CD4-positive, alpha-beta T cell (primary cell): ENCODE measurements at regions of chr16 and their contacts with region 1.

Region 1: GRCh38 chr16:17416461-17417311 is 54.1 kb downstream of the XYLT1 start:
- DNase-seq: peak; percentile 24 to 80 (median 37)
- ATAC-seq: peak; percentile 92
- H3K4me3 ChIP-seq: peak overlapping the region; percentile 46
- H3K4me3 Mint-ChIP-seq: peak overlapping the region; percentile 87
- H3K27ac ChIP-seq: peak overlapping the region; percentile 47 to 60
- H3K27ac Mint-ChIP-seq: peak overlapping the region; percentile 84
- H3K4me1 ChIP-seq: peaks cover 48% of the 10 kb centered on the region
- H3K4me1 Mint-ChIP-seq: peaks cover 53% of the 10 kb centered on the region
- H3K27me3 ChIP-seq: no peaks in the 10 kb centered on the region
- H3K27me3 Mint-ChIP-seq: no peaks in the 10 kb centered on the region
- CTCF ChIP-seq: peak; percentile 46

Region 2: DNA sequence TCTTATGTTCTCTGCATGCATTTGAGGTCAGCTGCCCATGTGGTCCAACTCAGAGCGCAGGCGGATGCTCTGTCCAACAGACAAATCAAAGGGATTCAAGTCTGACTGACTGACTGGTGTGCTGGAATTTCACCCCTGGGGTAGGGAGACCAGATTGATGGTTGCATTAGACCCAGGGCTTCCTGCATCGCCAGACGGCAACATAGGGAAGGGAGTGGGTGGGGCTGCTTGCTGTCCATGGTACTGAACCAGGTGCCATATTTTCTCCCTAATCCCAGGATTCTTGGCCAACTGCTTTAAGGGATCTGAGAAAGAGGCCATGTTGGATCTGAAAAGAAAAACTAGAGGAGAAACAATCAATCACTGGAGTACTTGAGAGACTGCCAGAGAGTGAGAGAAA is 277.9 kb before region 1 on chr16:
- CTCF ChIA-PET with region 1: no interaction called
- POLR2A ChIA-PET with region 1: no interaction called
- intact Hi-C with region 1: loop called in 1 of 2 experiments (anchors 5 kb)
- DNase-seq: no peak
- ATAC-seq: no peak
- H3K4me3 ChIP-seq: no peak overlapping the region
- H3K4me3 Mint-ChIP-seq: no peak overlapping the region
- H3K27ac ChIP-seq: no peak overlapping the region
- H3K27ac Mint-ChIP-seq: no peak overlapping the region
- H3K4me1 ChIP-seq: no peaks in the 10 kb centered on the region
- H3K4me1 Mint-ChIP-seq: peaks cover 17% of the 10 kb centered on the region
- H3K27me3 ChIP-seq: no peaks in the 10 kb centered on the region
- H3K27me3 Mint-ChIP-seq: no peaks in the 10 kb centered on the region
- CTCF ChIP-seq: no peak

Region 3: GRCh38 chr16:17313085-17313611 is 103.5 kb before region 1 on chr16:
- CTCF ChIA-PET with region 1: no interaction called
- POLR2A ChIA-PET with region 1: no interaction called
- intact Hi-C with region 1: no loop called
- DNase-seq: peak in 1 of 14 experiments; percentile 25
- ATAC-seq: no peak
- H3K4me3 ChIP-seq: no peak overlapping the region
- H3K4me3 Mint-ChIP-seq: no peak overlapping the region
- H3K27ac ChIP-seq: peak overlapping the region in 1 of 2 donors; percentile 9
- H3K27ac Mint-ChIP-seq: peak overlapping the region; percentile 52
- H3K4me1 ChIP-seq: peaks cover 12% of the 10 kb centered on the region
- H3K4me1 Mint-ChIP-seq: peaks cover 64% of the 10 kb centered on the region
- H3K27me3 ChIP-seq: no peaks in the 10 kb centered on the region
- H3K27me3 Mint-ChIP-seq: no peaks in the 10 kb centered on the region
- CTCF ChIP-seq: no peak

Region 4: GRCh38 chr16:17343028-17343427 is 73.7 kb before region 1 on chr16:
- CTCF ChIA-PET with region 1: no interaction called
- POLR2A ChIA-PET with region 1: no interaction called
- intact Hi-C with region 1: loop called in 1 of 2 experiments (anchors 5 kb)
- DNase-seq: peak in 11 of 14 experiments; percentile 6 to 76 (median 34)
- ATAC-seq: peak; percentile 83
- H3K4me3 ChIP-seq: no peak overlapping the region
- H3K4me3 Mint-ChIP-seq: peak overlapping the region; percentile 75
- H3K27ac ChIP-seq: no peak overlapping the region
- H3K27ac Mint-ChIP-seq: peak overlapping the region; percentile 86
- H3K4me1 ChIP-seq: peaks cover 72% of the 10 kb centered on the region
- H3K4me1 Mint-ChIP-seq: peaks cover 89% of the 10 kb centered on the region
- H3K27me3 ChIP-seq: no peaks in the 10 kb centered on the region
- H3K27me3 Mint-ChIP-seq: no peaks in the 10 kb centered on the region
- CTCF ChIP-seq: no peak

Region 5: DNA sequence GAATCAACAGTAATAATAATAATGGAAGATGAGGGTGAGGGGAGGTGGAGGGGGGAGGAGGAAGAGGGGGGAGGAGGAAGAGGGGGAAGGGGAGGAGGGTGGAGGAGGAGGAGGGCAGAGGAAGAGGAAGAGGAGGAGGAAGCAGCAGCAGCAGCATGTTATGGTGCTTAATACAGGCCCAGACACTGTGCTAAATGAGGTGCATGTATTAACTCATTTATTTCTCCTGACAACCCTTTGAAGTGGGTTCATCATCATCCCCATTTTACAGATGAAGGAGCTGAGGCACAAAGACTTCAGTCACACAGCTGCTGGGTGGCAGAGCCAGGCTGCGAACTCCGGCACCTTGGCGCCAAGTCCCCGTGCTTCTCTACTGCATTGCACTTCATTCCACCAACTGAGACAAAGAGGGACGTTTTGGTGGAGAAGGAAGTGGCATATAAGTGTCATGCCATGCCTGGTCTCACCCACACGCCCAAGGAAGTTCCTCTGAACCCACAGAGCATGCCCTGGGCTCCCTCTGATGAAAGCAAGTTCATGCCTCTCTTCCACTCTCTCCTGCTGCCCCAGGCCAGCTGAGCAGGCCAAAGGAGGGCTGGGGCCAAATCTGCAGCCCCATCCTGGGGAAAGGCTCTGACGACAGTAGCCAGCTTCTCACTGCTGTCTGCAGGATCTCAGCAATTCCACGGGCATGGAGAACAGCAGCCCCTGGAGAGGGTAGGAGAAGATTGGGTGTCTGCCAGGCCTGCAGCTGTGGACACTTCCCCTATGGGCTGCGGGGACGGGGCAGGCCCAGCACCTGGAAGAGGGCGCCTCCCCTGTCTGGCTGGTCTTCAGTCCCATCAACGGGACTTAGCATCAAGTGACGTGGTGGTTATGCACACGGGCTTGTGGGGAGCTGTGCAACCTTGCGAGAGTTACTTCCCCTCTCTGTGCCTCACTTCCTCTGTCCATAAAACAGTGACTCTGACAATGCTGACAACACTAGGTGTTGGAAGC is 32.3 kb after region 1 on chr16:
- CTCF ChIA-PET with region 1: no interaction called
- POLR2A ChIA-PET with region 1: no interaction called
- intact Hi-C with region 1: loop called in 1 of 2 experiments (anchors 2 kb)
- DNase-seq: peak in 11 of 14 experiments; percentile 2 to 85 (median 29)
- ATAC-seq: peak; percentile 81
- H3K4me3 ChIP-seq: peak overlapping the region; percentile 9
- H3K4me3 Mint-ChIP-seq: peak overlapping the region; percentile 49
- H3K27ac ChIP-seq: peak overlapping the region in 1 of 2 donors; percentile 62
- H3K27ac Mint-ChIP-seq: peak overlapping the region; percentile 92
- H3K4me1 ChIP-seq: peaks cover 52% of the 10 kb centered on the region
- H3K4me1 Mint-ChIP-seq: peaks cover 62% of the 10 kb centered on the region
- H3K27me3 ChIP-seq: no peaks in the 10 kb centered on the region
- H3K27me3 Mint-ChIP-seq: no peaks in the 10 kb centered on the region
- CTCF ChIP-seq: no peak

Region 6: DNA sequence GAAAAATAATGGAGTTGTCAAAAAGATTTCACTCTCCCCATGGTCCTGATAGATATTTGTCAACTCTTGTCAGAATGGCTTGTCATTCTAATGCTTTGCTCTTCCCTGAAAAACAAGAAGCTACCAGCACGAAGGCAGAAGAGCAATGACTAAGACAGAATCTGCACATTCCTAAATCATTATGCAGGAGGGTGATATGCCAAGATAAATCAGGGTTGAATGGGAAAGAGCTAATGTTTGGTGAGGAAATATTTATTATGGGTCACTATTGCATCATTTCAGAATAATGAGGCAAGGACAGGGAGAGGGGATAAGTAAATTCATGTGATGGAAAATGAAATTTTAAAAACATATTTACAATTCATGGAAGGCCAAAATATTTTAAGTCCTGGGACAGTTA is 351.6 kb after region 1 on chr16:
- CTCF ChIA-PET with region 1: no interaction called
- POLR2A ChIA-PET with region 1: no interaction called
- intact Hi-C with region 1: no loop called
- DNase-seq: no peak
- ATAC-seq: no peak
- H3K4me3 ChIP-seq: no peak overlapping the region
- H3K4me3 Mint-ChIP-seq: no peak overlapping the region
- H3K27ac ChIP-seq: no peak overlapping the region
- H3K27ac Mint-ChIP-seq: no peak overlapping the region
- H3K4me1 ChIP-seq: no peaks in the 10 kb centered on the region
- H3K4me1 Mint-ChIP-seq: no peaks in the 10 kb centered on the region
- H3K27me3 ChIP-seq: no peaks in the 10 kb centered on the region
- H3K27me3 Mint-ChIP-seq: peaks cover 16% of the 10 kb centered on the region
- CTCF ChIP-seq: no peak